ENCODE measurements at regions of chr19 and their contacts with region 1.

Region 1: GRCh38 chr19:37893845-37894575 is 12.4 kb downstream of the WDR87 start:
- DNase-seq: no peak
- H3K4me3 ChIP-seq: no peak overlapping the region
- H3K27ac ChIP-seq: no peak overlapping the region
- H3K4me1 ChIP-seq: no peaks in the 10 kb centered on the region
- H3K27me3 ChIP-seq: no peaks in the 10 kb centered on the region
- CTCF ChIP-seq: no peak

Region 2: GRCh38 chr19:37719111-37719926 is 174.7 kb before region 1 on chr19 and contains the start of gene ZNF607:
- CTCF ChIA-PET with region 1: no interaction called
- dilution Hi-C with region 1: no loop called
- in situ Hi-C with region 1: no loop called
- intact Hi-C with region 1: loop called (anchors 5 kb)
- DNase-seq: peak; percentile 91
- H3K4me3 ChIP-seq: peak within 1 kb of the TSS; percentile 76 to 97 (median 88)
- H3K27ac ChIP-seq: peak within 1 kb of the TSS; percentile 52
- H3K4me1 ChIP-seq: no peaks in the 10 kb centered on the region
- H3K27me3 ChIP-seq: no peaks in the 10 kb centered on the region
- CTCF ChIP-seq: peak; percentile 48 to 71
- total RNA-seq, gene ZNF607: 8.3 to 9.0 TPM

Region 3: GRCh38 chr19:37953533-37954303 is 59.7 kb after region 1 on chr19:
- CTCF ChIA-PET with region 1: no interaction called
- dilution Hi-C with region 1: no loop called
- in situ Hi-C with region 1: no loop called
- intact Hi-C with region 1: no loop called
- DNase-seq: no peak
- H3K4me3 ChIP-seq: no peak overlapping the region
- H3K27ac ChIP-seq: no peak overlapping the region
- H3K4me1 ChIP-seq: peaks cover 16% of the 10 kb centered on the region
- H3K27me3 ChIP-seq: no peaks in the 10 kb centered on the region
- CTCF ChIP-seq: no peak

Region 4: GRCh38 chr19:38107129-38107528 is 213.1 kb after region 1 on chr19:
- CTCF ChIA-PET with region 1: no interaction called
- dilution Hi-C with region 1: loop called (anchors 5 kb)
- in situ Hi-C with region 1: no loop called
- intact Hi-C with region 1: no loop called
- DNase-seq: no peak
- H3K4me3 ChIP-seq: no peak overlapping the region
- H3K27ac ChIP-seq: no peak overlapping the region
- H3K4me1 ChIP-seq: no peaks in the 10 kb centered on the region
- H3K27me3 ChIP-seq: no peaks in the 10 kb centered on the region
- CTCF ChIP-seq: no peak

Measured in mammary epithelial cell (primary cell).